AG04450 (cell line): ENCODE measurements at regions of chr7 and their contacts with region 1.

Region 1: DNA sequence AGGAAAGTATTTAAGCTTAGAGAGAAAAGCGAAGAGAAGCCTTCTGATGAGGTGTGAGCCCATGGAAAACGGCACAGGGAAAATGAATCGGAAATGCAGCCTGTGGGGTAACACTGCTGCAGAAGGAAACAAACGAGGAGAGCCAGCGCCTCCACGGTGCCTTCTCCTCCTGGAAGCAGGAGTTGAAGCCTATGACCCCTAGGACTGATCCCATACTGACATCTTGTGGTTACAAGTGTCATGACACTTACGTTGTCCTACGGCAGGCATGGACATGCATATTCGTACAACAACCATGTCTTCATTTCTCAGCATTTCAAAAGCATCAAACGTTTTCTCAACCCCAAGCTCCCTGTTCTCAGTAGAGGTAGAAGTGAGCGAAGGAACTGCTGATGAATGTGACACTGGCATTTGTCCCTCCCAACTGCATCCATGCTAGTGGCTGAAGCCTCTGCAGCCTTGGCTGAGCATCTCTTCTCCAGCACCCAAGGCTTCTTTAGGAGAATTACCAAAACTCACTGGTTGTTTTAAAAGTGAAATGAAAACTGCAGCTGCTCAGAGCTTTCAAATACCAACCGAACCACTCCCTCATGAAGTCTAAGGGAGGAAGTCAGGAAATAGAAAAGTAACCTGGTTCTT is 160.2 kb downstream of the JAZF1 start:
- DNase-seq: peak; percentile 46
- H3K4me3 ChIP-seq: no peak overlapping the region
- H3K27ac ChIP-seq: no peak overlapping the region
- H3K27me3 ChIP-seq: no peaks in the 10 kb centered on the region
- CTCF ChIP-seq: peak; percentile 87

Region 2: GRCh38 chr7:27745064-27745583 is 275.3 kb before region 1 on chr7:
- CTCF ChIA-PET with region 1: interaction called, 15 read pairs
- POLR2A ChIA-PET with region 1: no interaction called
- DNase-seq: peak; percentile 51
- H3K4me3 ChIP-seq: peak overlapping the region; percentile 21; the same call in 1 of the 2 replicates
- H3K27ac ChIP-seq: peak overlapping the region; percentile 79
- H3K27me3 ChIP-seq: no peaks in the 10 kb centered on the region
- CTCF ChIP-seq: peak; percentile 80

Region 3: DNA sequence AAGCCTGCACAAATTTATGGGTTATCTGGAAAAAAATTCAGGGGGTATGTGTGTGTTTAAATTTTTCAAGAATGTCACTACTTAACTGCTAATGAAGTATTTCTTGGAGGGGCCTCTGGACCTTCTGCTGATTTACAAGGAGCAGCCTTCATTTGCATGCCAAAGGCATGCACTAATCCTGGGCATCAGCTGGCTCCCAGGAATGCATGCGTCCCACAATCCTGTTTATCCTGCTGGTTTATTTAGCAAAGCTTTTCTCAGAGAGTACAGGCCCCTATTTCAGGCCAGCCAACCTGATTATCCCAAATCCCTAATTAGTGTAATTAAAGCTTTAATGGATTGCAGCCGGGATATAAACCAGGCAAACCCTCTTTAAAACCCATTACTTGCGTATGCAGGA is 110.1 kb before region 1 on chr7:
- CTCF ChIA-PET with region 1: interaction called, 10 read pairs
- POLR2A ChIA-PET with region 1: no interaction called
- DNase-seq: no peak
- H3K4me3 ChIP-seq: no peak overlapping the region
- H3K27ac ChIP-seq: no peak overlapping the region
- H3K27me3 ChIP-seq: no peaks in the 10 kb centered on the region
- CTCF ChIP-seq: no peak

Region 4: DNA sequence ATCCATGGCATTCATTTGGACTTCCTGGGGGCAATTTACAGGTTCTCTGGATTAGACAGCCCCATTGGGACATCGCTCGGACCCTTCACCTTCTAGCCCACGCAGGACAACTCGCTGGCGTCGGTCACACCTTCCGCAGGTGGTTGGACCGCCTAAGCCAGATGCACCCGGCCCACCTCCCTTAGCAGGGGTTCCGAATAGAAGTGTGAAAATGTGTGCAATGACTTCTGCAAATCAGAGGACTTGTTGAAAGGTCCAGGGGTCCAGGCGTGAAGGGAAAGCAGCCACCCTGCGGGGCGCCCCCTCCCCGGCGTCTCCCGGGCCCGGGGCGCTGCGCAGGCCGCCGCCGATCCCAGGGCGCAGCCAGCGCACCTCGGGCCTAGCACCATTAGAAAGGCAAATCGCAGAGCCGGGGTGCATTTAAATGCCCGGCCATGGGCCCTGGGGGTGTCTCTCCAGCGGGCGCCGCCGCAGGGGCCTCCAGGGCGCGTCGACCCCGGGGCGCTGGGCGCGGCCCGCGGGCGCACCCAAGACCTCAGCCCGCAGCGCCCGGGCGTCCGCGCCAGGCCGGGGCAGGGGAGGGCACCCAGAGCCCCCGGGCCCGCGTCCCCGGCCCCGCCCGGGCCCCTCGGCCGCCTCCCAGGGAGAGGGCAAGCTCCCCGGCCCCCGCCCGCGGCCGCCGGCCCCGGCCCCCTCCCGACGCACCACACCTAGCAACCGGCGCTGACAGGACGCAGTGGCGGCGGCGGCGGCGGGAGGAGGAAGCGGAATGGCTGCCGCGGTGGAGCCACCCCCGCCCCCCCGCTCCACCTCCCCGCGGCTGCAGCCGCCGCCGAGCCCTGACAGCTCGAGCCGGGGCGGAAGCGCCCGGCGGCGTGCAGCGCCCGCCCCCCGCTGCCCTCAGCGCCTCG is 159.0 kb after region 1 on chr7:
- CTCF ChIA-PET with region 1: no interaction called
- POLR2A ChIA-PET with region 1: no interaction called
- DNase-seq: no peak
- H3K4me3 ChIP-seq: peak overlapping the region; percentile 77
- H3K27ac ChIP-seq: no peak overlapping the region
- H3K27me3 ChIP-seq: no peaks in the 10 kb centered on the region
- CTCF ChIP-seq: no peak

Region 5: GRCh38 chr7:28708033-28708951 is 687.9 kb after region 1 on chr7:
- CTCF ChIA-PET with region 1: no interaction called
- POLR2A ChIA-PET with region 1: no interaction called
- DNase-seq: no peak
- H3K4me3 ChIP-seq: no peak overlapping the region
- H3K27ac ChIP-seq: no peak overlapping the region
- H3K27me3 ChIP-seq: no peaks in the 10 kb centered on the region
- CTCF ChIP-seq: no peak